ENCODE measurements at regions of chr6 and their contacts with region 1.

Region 1: GRCh38 chr6:131013495-131013894 is 49.5 kb downstream of the EPB41L2 start:
- DNase-seq: peak; percentile 91
- H3K4me3 ChIP-seq: no peak overlapping the region
- H3K27ac ChIP-seq: peak overlapping the region; percentile 32
- H3K4me1 ChIP-seq: peaks cover 38% of the 10 kb centered on the region
- H3K27me3 ChIP-seq: no peaks in the 10 kb centered on the region
- CTCF ChIP-seq: no peak
- POLR2A ChIP-seq: no peak

Region 2: DNA sequence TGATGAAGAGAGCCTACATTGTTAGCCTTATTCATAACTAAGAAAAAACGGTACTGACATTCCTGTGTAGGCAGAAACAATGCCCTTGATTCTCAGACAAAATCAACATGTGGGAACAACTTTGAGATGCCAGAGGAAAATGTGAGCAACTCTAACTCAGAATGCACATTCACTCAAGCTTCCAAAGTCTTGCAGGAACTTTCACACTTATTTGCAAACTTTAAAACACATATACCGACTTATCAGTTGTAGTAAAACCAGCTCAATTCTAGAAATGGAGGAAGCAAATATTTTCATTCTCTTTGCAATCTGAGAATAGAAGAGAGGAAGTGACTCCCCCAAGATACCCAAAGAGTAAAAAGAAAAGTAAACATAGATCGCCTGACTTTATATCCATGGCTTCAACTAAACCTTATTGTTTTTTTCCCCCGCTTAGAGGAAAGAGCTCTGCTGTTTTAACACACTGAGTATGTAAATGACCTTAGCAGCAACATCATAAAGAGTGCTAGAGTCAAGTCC is 68.0 kb before region 1 on chr6:
- CTCF ChIA-PET with region 1: interaction called, 5 read pairs
- POLR2A ChIA-PET with region 1: interaction called, 5 read pairs
- dilution Hi-C with region 1: no loop called
- intact Hi-C with region 1: loop called (anchors 5 kb)
- DNase-seq: peak; percentile 89
- H3K4me3 ChIP-seq: peak overlapping the region in 1 of 3 experiments; percentile 20
- H3K27ac ChIP-seq: peak overlapping the region; percentile 69
- H3K4me1 ChIP-seq: peaks cover 30% of the 10 kb centered on the region
- H3K27me3 ChIP-seq: no peaks in the 10 kb centered on the region
- CTCF ChIP-seq: no peak
- POLR2A ChIP-seq: no peak

Region 3: GRCh38 chr6:130967502-130968445 is 45.7 kb before region 1 on chr6:
- CTCF ChIA-PET with region 1: interaction called, 3 read pairs
- POLR2A ChIA-PET with region 1: no interaction called
- dilution Hi-C with region 1: no loop called
- intact Hi-C with region 1: loop called (anchors 2 kb)
- DNase-seq: peak; percentile 63
- H3K4me3 ChIP-seq: no peak overlapping the region
- H3K27ac ChIP-seq: no peak overlapping the region
- H3K4me1 ChIP-seq: peaks cover 20% of the 10 kb centered on the region
- H3K27me3 ChIP-seq: no peaks in the 10 kb centered on the region
- CTCF ChIP-seq: no peak
- POLR2A ChIP-seq: no peak

Region 4: DNA sequence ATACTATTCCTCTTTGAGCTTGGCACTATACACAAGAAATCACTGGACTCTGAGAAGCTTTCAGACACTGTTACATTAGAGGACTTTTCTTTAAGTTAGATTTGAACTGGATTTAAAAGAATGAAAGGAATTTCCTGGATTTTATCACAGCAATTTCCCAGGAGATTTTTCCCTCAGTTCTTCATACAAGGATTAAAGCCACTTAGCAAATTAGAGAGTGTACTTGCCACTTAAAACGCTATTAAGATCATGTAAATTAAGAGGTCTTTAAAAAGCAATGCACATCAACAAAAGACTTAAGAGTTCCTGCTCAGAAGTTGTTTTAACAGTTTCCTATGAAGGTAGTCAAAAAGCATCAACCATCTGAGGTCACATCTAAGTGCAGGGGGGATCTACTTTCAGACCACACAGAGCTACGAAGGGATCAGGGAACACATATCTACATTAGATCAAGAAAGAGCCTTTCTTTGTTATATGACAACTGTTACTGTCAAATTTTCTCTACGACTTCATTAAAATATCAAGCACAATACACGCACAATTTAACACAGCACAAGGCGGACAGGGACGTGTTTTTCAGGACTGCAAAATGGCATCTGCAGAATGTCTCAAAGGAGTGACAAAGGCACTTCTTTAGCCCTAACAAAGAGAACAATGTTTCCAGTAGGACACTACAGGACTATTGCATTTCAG is 16.3 kb before region 1 on chr6:
- CTCF ChIA-PET with region 1: interaction called, 12 read pairs
- POLR2A ChIA-PET with region 1: interaction called, 6 read pairs
- dilution Hi-C with region 1: no loop called
- intact Hi-C with region 1: no loop called
- DNase-seq: peak; percentile 74
- H3K4me3 ChIP-seq: no peak overlapping the region
- H3K27ac ChIP-seq: no peak overlapping the region
- H3K4me1 ChIP-seq: peaks cover 23% of the 10 kb centered on the region
- H3K27me3 ChIP-seq: no peaks in the 10 kb centered on the region
- CTCF ChIP-seq: no peak
- POLR2A ChIP-seq: no peak

Region 5: GRCh38 chr6:131023834-131024504 is 10.5 kb after region 1 on chr6:
- CTCF ChIA-PET with region 1: interaction called, 4 read pairs
- POLR2A ChIA-PET with region 1: no interaction called
- dilution Hi-C with region 1: no loop called
- intact Hi-C with region 1: loop called (anchors 1 kb)
- DNase-seq: peak; percentile 69
- H3K4me3 ChIP-seq: no peak overlapping the region
- H3K27ac ChIP-seq: peak overlapping the region; percentile 19
- H3K4me1 ChIP-seq: peaks cover 4% of the 10 kb centered on the region
- H3K27me3 ChIP-seq: no peaks in the 10 kb centered on the region
- CTCF ChIP-seq: no peak
- POLR2A ChIP-seq: no peak

Measured in endothelial cell of umbilical vein (primary cell).